Activated CD4-positive, alpha-beta memory T cell treated with anti-CD3 and anti-CD28 coated beads for 36 hours (primary cell): ENCODE measurements at regions of chr12 and their contacts with region 1.

Region 1: DNA sequence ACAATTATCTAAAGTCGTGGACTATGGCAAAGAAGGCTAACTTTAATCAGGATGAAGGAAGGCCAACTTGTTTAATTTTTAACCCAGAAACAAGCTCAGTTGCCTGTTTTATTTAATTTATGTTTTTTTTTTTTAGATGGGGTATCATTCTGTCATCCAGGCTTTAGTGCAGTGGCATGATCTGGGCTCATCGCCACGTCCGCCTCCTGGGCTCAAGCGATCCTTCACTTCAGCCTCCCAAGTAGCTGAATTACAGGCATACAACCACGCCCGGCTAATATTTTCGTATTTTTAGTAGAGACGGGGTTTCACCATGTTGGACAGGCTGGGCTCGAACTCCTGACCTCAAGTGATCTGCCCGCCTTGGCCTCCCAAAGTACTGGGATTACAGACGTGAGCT is 19.7 kb downstream of the NUDT4 start:
- DNase-seq: no peak
- H3K4me3 Mint-ChIP-seq: no peak overlapping the region
- H3K27ac Mint-ChIP-seq: no peak overlapping the region
- H3K4me1 Mint-ChIP-seq: peaks cover 6% of the 10 kb centered on the region
- H3K27me3 Mint-ChIP-seq: no peaks in the 10 kb centered on the region

Region 2: DNA sequence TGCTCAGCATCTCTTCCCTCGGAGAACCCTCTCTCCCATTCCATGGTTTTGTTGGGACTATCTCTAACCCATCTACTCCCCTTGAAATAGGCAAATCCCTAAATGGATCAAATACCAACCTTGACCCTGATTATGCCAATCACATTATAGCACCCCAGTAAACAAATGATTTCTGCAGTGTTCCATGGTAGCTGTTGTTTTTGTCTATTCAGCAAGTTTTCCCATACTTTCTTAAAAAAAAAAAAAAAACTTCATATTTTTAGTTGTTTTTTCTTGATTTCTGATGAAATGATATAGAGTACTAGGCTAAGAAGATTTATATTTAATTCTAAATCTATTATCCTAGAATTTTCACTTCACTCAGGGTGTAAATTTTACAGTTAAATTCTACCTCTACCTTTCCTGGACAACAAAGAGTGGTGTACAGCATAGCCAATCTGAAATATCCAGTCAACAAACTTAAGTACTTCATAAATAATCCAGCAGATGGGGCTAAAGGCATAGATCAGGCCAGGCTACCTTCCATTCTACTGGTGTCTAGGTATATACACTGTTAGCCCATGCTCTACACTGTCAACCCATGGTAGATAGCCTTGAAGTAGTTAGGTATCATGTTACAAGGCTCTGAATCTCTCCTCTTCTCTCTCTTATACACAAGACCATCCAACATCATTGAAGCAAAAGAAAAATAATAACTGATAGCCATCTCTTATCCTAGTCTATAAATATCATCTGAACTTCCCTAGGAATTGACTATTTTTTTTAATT is 612.4 kb before region 1 on chr12:
- CTCF ChIA-PET with region 1: no interaction called
- POLR2A ChIA-PET with region 1: no interaction called
- intact Hi-C with region 1: loop called (anchors 2 kb)
- DNase-seq: no peak
- H3K4me3 Mint-ChIP-seq: no peak overlapping the region
- H3K27ac Mint-ChIP-seq: no peak overlapping the region
- H3K4me1 Mint-ChIP-seq: no peaks in the 10 kb centered on the region
- H3K27me3 Mint-ChIP-seq: no peaks in the 10 kb centered on the region

Region 3: GRCh38 chr12:93378373-93379325 is 18.8 kb before region 1 on chr12:
- CTCF ChIA-PET with region 1: interaction called, 18 read pairs
- POLR2A ChIA-PET with region 1: no interaction called
- intact Hi-C with region 1: no loop called
- DNase-seq: peak; percentile 74
- H3K4me3 Mint-ChIP-seq: peak overlapping the region; percentile 99
- H3K27ac Mint-ChIP-seq: peak overlapping the region; percentile 99
- H3K4me1 Mint-ChIP-seq: peaks cover 40% of the 10 kb centered on the region
- H3K27me3 Mint-ChIP-seq: no peaks in the 10 kb centered on the region

Region 4: GRCh38 chr12:93413064-93413463 is 15.7 kb after region 1 on chr12:
- CTCF ChIA-PET with region 1: interaction called, 11 read pairs
- POLR2A ChIA-PET with region 1: no interaction called
- intact Hi-C with region 1: no loop called
- DNase-seq: no peak
- H3K4me3 Mint-ChIP-seq: no peak overlapping the region
- H3K27ac Mint-ChIP-seq: no peak overlapping the region
- H3K4me1 Mint-ChIP-seq: peaks cover 74% of the 10 kb centered on the region
- H3K27me3 Mint-ChIP-seq: no peaks in the 10 kb centered on the region